Caco-2 (cell line): ENCODE measurements at regions of chr20 and their contacts with region 1.

Region 1: DNA sequence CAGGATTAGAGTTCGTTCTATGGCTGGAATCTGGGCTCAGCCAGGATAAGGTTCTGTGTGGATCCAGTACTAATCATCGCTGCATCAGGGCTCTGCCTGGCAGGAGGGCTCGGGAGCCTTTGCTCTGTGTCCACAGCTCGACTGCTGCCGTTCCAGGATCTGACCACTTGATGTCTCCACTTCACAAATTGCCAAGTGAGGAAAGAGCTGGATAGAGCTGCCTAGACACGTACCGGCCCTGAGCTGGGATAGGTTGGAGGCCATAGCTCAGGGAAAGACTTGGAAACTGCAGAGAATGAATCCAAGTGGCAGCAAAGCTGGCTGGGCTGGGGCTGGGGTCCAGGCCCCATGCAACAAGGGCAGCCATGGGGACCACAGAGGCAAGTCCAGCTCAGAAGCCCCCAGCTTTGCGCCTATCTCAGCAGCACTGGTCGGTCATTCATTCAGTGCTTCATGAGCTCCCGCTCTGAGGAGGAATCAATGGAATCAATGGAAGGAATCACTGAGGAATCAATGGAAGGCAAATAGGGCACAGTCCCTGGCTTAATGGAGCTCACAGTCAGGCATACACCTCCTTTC is 38.0 kb upstream of the TOP1 start:
- DNase-seq: peak; percentile 95
- H3K4me3 ChIP-seq: no peak overlapping the region
- H3K4me3 Mint-ChIP-seq: no peak overlapping the region
- H3K27ac Mint-ChIP-seq: peak overlapping the region; percentile 62
- H3K4me1 ChIP-seq: peaks cover 12% of the 10 kb centered on the region
- H3K4me1 Mint-ChIP-seq: peaks cover 17% of the 10 kb centered on the region
- H3K27me3 ChIP-seq: no peaks in the 10 kb centered on the region
- H3K27me3 Mint-ChIP-seq: no peaks in the 10 kb centered on the region
- CTCF ChIP-seq: peak; percentile 96 to 99

Region 2: GRCh38 chr20:40668449-40669228 is 322.0 kb before region 1 on chr20:
- CTCF ChIA-PET with region 1: no interaction called
- POLR2A ChIA-PET with region 1: no interaction called
- intact Hi-C with region 1: no loop called
- DNase-seq: peak; percentile 72 to 90
- H3K4me3 ChIP-seq: no peak overlapping the region
- H3K4me3 Mint-ChIP-seq: no peak overlapping the region
- H3K27ac Mint-ChIP-seq: no peak overlapping the region
- H3K4me1 ChIP-seq: peaks cover 32% of the 10 kb centered on the region
- H3K4me1 Mint-ChIP-seq: peaks cover 6% of the 10 kb centered on the region
- H3K27me3 ChIP-seq: no peaks in the 10 kb centered on the region
- H3K27me3 Mint-ChIP-seq: no peaks in the 10 kb centered on the region
- CTCF ChIP-seq: no peak

Region 3: DNA sequence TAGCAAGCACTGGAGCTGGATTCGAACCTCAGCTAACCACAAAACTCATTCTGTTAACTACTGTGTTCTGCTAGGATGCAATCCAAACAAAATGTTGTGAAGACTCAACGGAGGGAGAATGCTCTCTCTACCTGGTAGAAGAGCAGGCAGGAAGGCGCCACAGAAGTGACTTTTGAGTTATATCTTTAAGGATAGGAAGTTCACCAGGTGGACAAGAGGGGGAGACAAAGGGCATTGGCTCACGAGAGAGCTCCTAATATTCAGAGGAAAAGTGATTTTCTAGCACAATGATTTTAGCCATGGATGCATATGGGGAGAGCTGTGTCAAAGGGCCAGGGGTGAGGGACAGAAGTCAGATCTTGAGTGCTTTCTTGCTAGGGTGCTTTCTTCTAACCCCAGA is 193.2 kb before region 1 on chr20:
- CTCF ChIA-PET with region 1: interaction called, 11 read pairs
- POLR2A ChIA-PET with region 1: no interaction called
- intact Hi-C with region 1: no loop called
- DNase-seq: peak in 1 of 2 experiments; percentile 71
- H3K4me3 ChIP-seq: no peak overlapping the region
- H3K4me3 Mint-ChIP-seq: no peak overlapping the region
- H3K27ac Mint-ChIP-seq: no peak overlapping the region
- H3K4me1 ChIP-seq: no peaks in the 10 kb centered on the region
- H3K4me1 Mint-ChIP-seq: no peaks in the 10 kb centered on the region
- H3K27me3 ChIP-seq: peaks cover 2% of the 10 kb centered on the region
- H3K27me3 Mint-ChIP-seq: peaks cover 23% of the 10 kb centered on the region
- CTCF ChIP-seq: peak; percentile 92 to 97

Region 4: GRCh38 chr20:41003143-41003883 is 12.7 kb after region 1 on chr20:
- CTCF ChIA-PET with region 1: interaction called, 47 read pairs
- POLR2A ChIA-PET with region 1: interaction called, 3 read pairs
- intact Hi-C with region 1: loop called (anchors 1 kb)
- DNase-seq: peak; percentile 93 to 96
- H3K4me3 ChIP-seq: no peak overlapping the region
- H3K4me3 Mint-ChIP-seq: peak overlapping the region; percentile 65
- H3K27ac Mint-ChIP-seq: peak overlapping the region; percentile 89
- H3K4me1 ChIP-seq: peaks cover 38% of the 10 kb centered on the region
- H3K4me1 Mint-ChIP-seq: peaks cover 39% of the 10 kb centered on the region
- H3K27me3 ChIP-seq: no peaks in the 10 kb centered on the region
- H3K27me3 Mint-ChIP-seq: no peaks in the 10 kb centered on the region
- CTCF ChIP-seq: no peak

Region 5: DNA sequence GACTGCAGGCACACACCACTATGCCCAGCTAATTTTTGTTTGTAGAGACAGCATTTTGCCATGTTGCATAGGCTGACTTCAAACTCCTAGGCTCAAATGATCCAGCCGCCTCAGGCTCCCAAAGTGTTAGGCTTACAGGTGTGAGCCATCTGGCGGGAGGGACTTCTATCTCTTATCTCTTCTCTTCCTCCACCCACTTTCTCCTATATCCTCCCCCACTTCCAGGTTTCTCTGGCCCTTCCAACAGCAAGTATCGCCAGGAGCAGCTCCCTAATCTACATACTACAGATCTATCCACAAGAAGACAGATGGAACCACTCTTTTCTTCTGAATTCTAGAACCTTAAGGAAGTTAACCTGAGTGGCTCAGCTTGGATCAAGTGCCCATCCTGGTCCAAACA is 32.9 kb after region 1 on chr20:
- CTCF ChIA-PET with region 1: interaction called, 51 read pairs
- POLR2A ChIA-PET with region 1: interaction called, 8 read pairs
- intact Hi-C with region 1: loop called (anchors 1 kb)
- DNase-seq: no peak
- H3K4me3 ChIP-seq: no peak overlapping the region
- H3K4me3 Mint-ChIP-seq: no peak overlapping the region
- H3K27ac Mint-ChIP-seq: peak overlapping the region; percentile 1
- H3K4me1 ChIP-seq: peaks cover 24% of the 10 kb centered on the region
- H3K4me1 Mint-ChIP-seq: peaks cover 32% of the 10 kb centered on the region
- H3K27me3 ChIP-seq: no peaks in the 10 kb centered on the region
- H3K27me3 Mint-ChIP-seq: no peaks in the 10 kb centered on the region
- CTCF ChIP-seq: no peak

Region 6: GRCh38 chr20:41047975-41048305 is 57.3 kb after region 1 on chr20:
- CTCF ChIA-PET with region 1: interaction called, 47 read pairs
- POLR2A ChIA-PET with region 1: interaction called, 3 read pairs
- intact Hi-C with region 1: no loop called
- DNase-seq: no peak
- H3K4me3 ChIP-seq: no peak overlapping the region
- H3K4me3 Mint-ChIP-seq: no peak overlapping the region
- H3K27ac Mint-ChIP-seq: no peak overlapping the region
- H3K4me1 ChIP-seq: peaks cover 61% of the 10 kb centered on the region
- H3K4me1 Mint-ChIP-seq: peaks cover 66% of the 10 kb centered on the region
- H3K27me3 ChIP-seq: no peaks in the 10 kb centered on the region
- H3K27me3 Mint-ChIP-seq: no peaks in the 10 kb centered on the region
- CTCF ChIP-seq: no peak

Region 7: GRCh38 chr20:41072190-41072863 is 81.7 kb after region 1 on chr20:
- CTCF ChIA-PET with region 1: interaction called, 110 read pairs
- POLR2A ChIA-PET with region 1: no interaction called
- intact Hi-C with region 1: no loop called
- DNase-seq: no peak
- H3K4me3 ChIP-seq: no peak overlapping the region
- H3K4me3 Mint-ChIP-seq: no peak overlapping the region
- H3K27ac Mint-ChIP-seq: no peak overlapping the region
- H3K4me1 ChIP-seq: peaks cover 8% of the 10 kb centered on the region
- H3K4me1 Mint-ChIP-seq: peaks cover 22% of the 10 kb centered on the region
- H3K27me3 ChIP-seq: no peaks in the 10 kb centered on the region
- H3K27me3 Mint-ChIP-seq: no peaks in the 10 kb centered on the region
- CTCF ChIP-seq: no peak

Region 8: GRCh38 chr20:41095110-41095969 is 104.7 kb after region 1 on chr20:
- CTCF ChIA-PET with region 1: interaction called, 140 read pairs
- POLR2A ChIA-PET with region 1: interaction called, 10 read pairs
- intact Hi-C with region 1: loop called (anchors 1 kb)
- DNase-seq: peak; percentile 66 to 75
- H3K4me3 ChIP-seq: no peak overlapping the region
- H3K4me3 Mint-ChIP-seq: no peak overlapping the region
- H3K27ac Mint-ChIP-seq: no peak overlapping the region
- H3K4me1 ChIP-seq: no peaks in the 10 kb centered on the region
- H3K4me1 Mint-ChIP-seq: no peaks in the 10 kb centered on the region
- H3K27me3 ChIP-seq: no peaks in the 10 kb centered on the region
- H3K27me3 Mint-ChIP-seq: no peaks in the 10 kb centered on the region
- CTCF ChIP-seq: peak; percentile 98 to 99